Activated CD4-positive, alpha-beta memory T cell treated with anti-CD3 and anti-CD28 coated beads for 36 hours (primary cell): ENCODE measurements at regions of chr6 and their contacts with region 1.

Region 1: GRCh38 chr6:108848116-108848868 is at the start of gene ARMC2:
- DNase-seq: peak; percentile 93
- H3K4me3 Mint-ChIP-seq: peak within 1 kb of the TSS; percentile 83
- H3K27ac Mint-ChIP-seq: peak within 1 kb of the TSS; percentile 67
- H3K4me1 Mint-ChIP-seq: peaks cover 23% of the 10 kb centered on the region
- H3K27me3 Mint-ChIP-seq: no peaks in the 10 kb centered on the region
- total RNA-seq, gene ARMC2: 4.4 to 7.9 TPM

Region 2: DNA sequence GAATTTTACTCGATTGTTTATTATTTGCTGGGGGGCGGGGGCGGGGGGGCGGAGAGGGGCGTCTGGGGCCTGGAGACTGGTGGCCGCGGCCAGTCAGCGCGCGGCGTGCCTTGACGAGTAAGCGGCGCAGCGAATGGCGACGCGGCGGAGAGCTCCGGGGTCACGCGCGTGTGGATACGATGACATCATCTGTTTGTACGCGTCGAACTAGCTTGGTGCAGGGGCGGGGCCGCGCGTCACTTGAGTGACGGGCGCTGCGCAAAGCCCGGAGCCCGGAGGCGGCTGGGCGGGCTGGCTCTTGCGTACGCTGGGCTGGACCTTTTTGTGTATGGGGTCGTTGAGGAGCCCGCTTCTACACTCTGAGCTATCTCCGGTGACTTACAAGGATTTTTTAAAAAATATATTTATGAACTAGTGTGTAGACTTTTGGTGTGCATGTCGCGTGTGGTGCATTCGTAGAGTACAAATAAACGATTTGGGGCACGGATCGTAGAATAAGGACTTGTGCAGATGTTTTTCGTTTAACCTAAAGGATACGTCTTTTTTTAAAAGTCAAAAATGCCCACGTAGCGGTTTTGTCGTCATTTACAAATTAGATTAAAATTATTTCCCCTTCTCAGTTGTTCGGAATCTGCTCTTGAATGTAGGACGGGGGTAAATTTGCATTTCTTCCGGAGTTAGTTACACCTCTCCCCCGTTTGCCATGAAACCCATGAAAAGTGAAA is 289.8 kb before region 1 on chr6:
- CTCF ChIA-PET with region 1: interaction called, 6 read pairs
- POLR2A ChIA-PET with region 1: interaction called, 9 read pairs
- intact Hi-C with region 1: loop called (anchors 1 kb)
- DNase-seq: peak; percentile 97
- H3K4me3 Mint-ChIP-seq: peak overlapping the region; percentile 93
- H3K27ac Mint-ChIP-seq: peak overlapping the region; percentile 96
- H3K4me1 Mint-ChIP-seq: peaks cover 25% of the 10 kb centered on the region
- H3K27me3 Mint-ChIP-seq: no peaks in the 10 kb centered on the region

Region 3: DNA sequence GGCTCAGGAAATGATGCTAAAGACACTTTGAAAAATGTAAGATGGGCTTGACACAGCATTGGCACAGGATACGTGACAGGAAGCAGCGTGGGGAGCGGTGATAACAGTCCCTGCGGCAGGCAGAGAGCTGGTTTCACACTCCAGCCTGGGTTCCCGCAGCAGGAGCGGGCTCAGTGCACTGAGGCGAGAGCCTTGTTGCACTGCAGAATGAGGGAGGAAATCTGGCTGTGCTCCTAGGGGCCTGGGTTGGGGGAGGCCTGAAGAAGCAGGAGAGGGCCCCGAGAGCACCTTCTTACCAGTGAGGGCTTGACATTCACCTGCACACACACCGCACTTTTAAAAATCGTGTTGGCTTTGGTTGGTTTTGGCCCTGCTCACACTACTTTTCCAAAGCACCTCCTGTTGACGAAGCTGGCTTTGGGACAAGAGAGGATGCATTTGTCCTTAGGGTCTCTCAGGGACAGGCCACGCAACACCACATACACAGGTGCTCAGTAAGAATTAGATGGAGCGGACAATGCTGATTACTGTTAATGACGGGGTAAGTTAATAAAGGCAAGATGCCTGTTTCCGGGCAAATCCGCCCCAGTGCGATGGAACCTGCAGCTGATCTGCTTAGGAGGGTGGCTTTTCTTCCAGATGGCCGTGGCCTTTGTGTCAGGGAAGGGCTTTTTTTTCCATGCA is 49.5 kb before region 1 on chr6:
- CTCF ChIA-PET with region 1: no interaction called
- POLR2A ChIA-PET with region 1: no interaction called
- intact Hi-C with region 1: no loop called
- DNase-seq: peak; percentile 76
- H3K4me3 Mint-ChIP-seq: no peak overlapping the region
- H3K27ac Mint-ChIP-seq: peak overlapping the region; percentile 35
- H3K4me1 Mint-ChIP-seq: peaks cover 15% of the 10 kb centered on the region
- H3K27me3 Mint-ChIP-seq: no peaks in the 10 kb centered on the region